Left lung (tissue), 14 donors: ENCODE measurements at regions of chr14 and their contacts with region 1.

Region 1: DNA sequence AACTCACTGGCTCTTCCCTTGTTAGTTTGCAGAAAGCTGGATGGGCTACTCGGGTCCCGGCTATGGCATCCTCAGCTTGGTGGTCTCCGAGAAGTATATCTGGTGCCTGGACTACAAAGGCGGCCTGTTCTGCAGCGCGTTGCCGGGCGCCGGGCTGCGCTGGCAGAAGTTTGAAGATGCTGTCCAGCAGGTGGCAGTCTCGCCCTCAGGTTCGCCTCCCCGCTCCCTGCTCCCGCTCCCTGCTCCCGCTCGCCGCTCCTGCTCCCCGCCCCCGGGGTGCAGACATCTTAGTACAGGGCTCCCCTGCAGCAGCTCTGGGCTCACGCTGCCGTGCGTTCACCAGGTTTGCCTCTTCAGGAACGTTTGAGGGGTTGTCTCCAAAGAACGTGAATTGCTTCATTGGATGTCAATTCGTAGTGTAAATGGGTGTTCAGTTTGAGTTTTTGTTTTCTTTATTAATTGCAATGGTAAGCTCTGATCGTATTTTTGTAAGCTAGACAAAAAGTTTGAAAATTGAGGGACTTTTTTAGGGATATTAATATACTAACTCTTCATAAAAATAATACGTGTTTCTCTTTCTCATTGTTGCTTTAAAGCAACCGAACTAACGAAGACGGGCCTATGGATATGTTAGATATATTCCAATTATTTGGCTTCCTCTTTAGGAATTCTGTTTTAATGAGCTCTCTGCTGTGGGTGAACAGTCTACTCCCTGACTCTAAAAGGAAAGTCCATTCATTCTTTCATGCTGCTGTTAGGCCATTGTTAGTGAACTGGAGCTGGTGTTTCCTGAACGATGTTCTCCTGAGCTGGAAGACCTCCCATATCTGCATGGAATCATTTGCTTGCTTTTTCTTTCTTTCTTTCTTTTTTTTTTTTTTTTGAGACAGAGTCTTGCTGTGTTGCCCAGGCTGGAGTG is 71.3 kb downstream of the ANKRD9 start:
- DNase-seq: peak; percentile 86 to 93 (median 91)
- ATAC-seq: peak; percentile 99
- H3K4me3 ChIP-seq: no peak overlapping the region
- H3K27ac ChIP-seq: no peak overlapping the region
- H3K4me1 ChIP-seq: peaks cover 0 to 9% of the 10 kb centered on the region in 2 donors
- H3K27me3 ChIP-seq: no peaks in the 10 kb centered on the region
- CTCF ChIP-seq: peak; percentile 74 to 87

Region 2: GRCh38 chr14:101654051-101654450 is 784.2 kb before region 1 on chr14:
- intact Hi-C with region 1: no loop called
- DNase-seq: no peak
- ATAC-seq: no peak
- H3K4me3 ChIP-seq: no peak overlapping the region
- H3K27ac ChIP-seq: no peak overlapping the region
- H3K4me1 ChIP-seq: no peaks in the 10 kb centered on the region
- H3K27me3 ChIP-seq: peaks cover 8 to 39% of the 10 kb centered on the region in 2 donors
- CTCF ChIP-seq: no peak

Region 3: DNA sequence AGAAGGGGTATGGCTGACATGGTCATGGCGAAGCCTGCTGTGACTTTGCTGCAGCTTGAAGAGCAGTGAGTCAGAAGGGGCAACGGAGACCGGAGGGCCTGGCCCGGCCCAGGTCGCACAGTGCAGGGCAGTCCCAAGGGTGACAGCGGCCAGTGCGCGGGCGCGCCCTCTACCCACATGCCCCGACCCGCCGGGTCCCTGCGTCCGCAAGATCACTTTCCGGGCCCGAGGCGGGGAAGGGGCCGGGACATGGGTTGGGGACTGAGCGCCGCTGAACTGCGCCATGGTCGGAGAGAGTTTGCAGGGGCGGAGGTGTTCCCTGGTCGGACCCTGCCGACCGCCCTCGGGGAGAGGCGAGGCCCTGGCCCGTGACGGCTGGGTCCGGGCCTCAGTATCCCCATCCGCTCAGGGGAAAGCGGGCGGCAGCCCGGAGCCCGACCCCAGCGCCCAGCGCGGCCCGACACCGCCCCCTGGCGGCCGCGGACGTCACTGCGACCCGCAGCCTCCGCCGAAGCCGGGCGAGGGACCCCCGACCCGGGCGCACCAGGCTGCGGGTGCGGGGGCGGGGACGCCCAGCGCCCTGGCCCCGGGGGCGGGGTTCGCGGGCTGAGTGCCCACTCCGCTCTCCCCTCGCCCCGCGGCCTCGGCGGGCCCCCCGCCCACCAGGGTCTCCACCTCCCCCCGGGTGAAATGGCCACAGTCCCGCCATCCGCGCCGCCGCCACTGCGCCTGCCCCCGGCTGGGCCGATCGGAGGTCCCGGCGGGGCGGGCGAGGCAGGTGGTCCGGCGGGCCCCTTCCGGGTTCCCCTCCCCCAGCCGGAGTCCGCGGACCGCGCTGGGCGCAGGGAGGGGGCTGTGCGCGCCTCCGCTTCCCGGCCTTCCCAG is 78.5 kb after region 1 on chr14:
- intact Hi-C with region 1: loop called in 1 of 2 experiments (anchors 5 kb)
- DNase-seq: peak in 2 of 4 donors; percentile 64 to 94
- ATAC-seq: peak; percentile 94
- H3K4me3 ChIP-seq: peak overlapping the region; percentile 57 to 62
- H3K27ac ChIP-seq: peak overlapping the region in 1 of 2 donors; percentile 30
- H3K4me1 ChIP-seq: peaks cover 0 to 10% of the 10 kb centered on the region in 2 donors
- H3K27me3 ChIP-seq: no peaks in the 10 kb centered on the region
- CTCF ChIP-seq: peak; percentile 87 to 94